Thyroid gland (tissue), 4 donors: ENCODE measurements at regions of chr5 and their contacts with region 1.

Region 1: GRCh38 chr5:171913987-171914273 is 92.5 kb downstream of the FBXW11 start:
- DNase-seq: no peak
- H3K4me3 ChIP-seq: no peak overlapping the region
- H3K27ac ChIP-seq: no peak overlapping the region
- H3K4me1 ChIP-seq: peaks cover 4 to 22% of the 10 kb centered on the region in 2 donors
- H3K27me3 ChIP-seq: no peaks in the 10 kb centered on the region
- CTCF ChIP-seq: no peak
- POLR2A ChIP-seq: no peak

Region 2: DNA sequence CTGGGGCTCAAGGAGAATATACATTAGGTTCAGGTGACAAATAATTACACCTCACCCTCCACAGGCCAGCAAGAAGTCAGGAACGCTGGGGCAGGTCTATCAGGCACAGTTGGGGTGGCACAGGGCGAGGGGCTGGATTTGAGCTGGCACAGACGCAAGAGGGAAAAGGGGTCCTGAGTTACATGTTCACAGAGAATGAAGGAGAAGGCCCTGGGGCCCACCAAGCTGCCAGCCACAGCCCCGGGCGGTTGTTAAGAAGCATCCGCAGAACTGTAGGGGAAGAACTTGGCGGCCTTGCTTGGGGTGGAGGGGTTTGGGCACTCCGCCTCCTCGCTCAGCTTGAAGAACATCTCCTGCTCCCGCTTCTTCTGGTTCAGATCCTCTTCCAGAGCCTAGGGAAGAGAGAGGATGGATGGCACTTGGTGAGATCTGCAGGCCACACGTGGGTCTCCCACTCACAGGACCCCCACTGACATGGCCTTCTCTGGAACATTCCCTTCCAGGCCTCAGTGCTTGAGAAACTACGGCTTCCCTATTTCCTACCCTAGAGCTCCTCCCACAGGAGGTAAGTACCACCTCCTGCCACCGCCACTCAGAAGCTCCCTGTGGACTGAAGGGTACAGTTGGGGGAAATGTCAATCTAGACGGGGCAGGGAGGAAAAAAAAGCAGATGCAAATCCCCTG is 130.8 kb after region 1 on chr5:
- intact Hi-C with region 1: loop called (anchors 5 kb)
- DNase-seq: no peak
- H3K4me3 ChIP-seq: no peak overlapping the region
- H3K27ac ChIP-seq: no peak overlapping the region
- H3K4me1 ChIP-seq: no peaks in the 10 kb centered on the region
- H3K27me3 ChIP-seq: no peaks in the 10 kb centered on the region
- CTCF ChIP-seq: no peak
- POLR2A ChIP-seq: no peak